CD4-positive, alpha-beta memory T cell (primary cell): ENCODE measurements at regions of chr6 and their contacts with region 1.

Region 1: GRCh38 chr6:45930420-45931040 is 85.1 kb downstream of the CLIC5 start:
- DNase-seq: peak; percentile 39 to 50 (median 45)
- H3K4me3 ChIP-seq: no peak overlapping the region
- H3K4me3 Mint-ChIP-seq: no peak overlapping the region
- H3K27ac ChIP-seq: no peak overlapping the region
- H3K27ac Mint-ChIP-seq: peak overlapping the region in 4 of 7 donors; percentile 5 to 46 (median 10)
- H3K4me1 ChIP-seq: no peaks in the 10 kb centered on the region
- H3K4me1 Mint-ChIP-seq: peaks cover 5 to 8% (median 5%) of the 10 kb centered on the region in 4 donors
- H3K27me3 ChIP-seq: no peaks in the 10 kb centered on the region
- H3K27me3 Mint-ChIP-seq: no peaks in the 10 kb centered on the region

Region 2: GRCh38 chr6:44475779-44476434 is 1454.6 kb before region 1 on chr6:
- CTCF ChIA-PET with region 1: interaction called, 14 read pairs
- POLR2A ChIA-PET with region 1: no interaction called
- intact Hi-C with region 1: no loop called
- DNase-seq: peak; percentile 47 to 66 (median 63)
- H3K4me3 ChIP-seq: no peak overlapping the region
- H3K4me3 Mint-ChIP-seq: no peak overlapping the region
- H3K27ac ChIP-seq: no peak overlapping the region
- H3K27ac Mint-ChIP-seq: no peak overlapping the region
- H3K4me1 ChIP-seq: peaks cover 6% of the 10 kb centered on the region
- H3K4me1 Mint-ChIP-seq: peaks cover 0 to 5% (median 2%) of the 10 kb centered on the region in 4 donors
- H3K27me3 ChIP-seq: no peaks in the 10 kb centered on the region
- H3K27me3 Mint-ChIP-seq: peaks cover 2 to 3% of the 10 kb centered on the region in 2 donors

Region 3: GRCh38 chr6:46011241-46012085 is 80.9 kb after region 1 on chr6:
- CTCF ChIA-PET with region 1: interaction called, 15 read pairs
- POLR2A ChIA-PET with region 1: interaction called, 5 read pairs
- intact Hi-C with region 1: loop called (anchors 2 kb)
- DNase-seq: peak; percentile 72 to 92 (median 83)
- H3K4me3 ChIP-seq: peak overlapping the region; percentile 32 to 42
- H3K4me3 Mint-ChIP-seq: peak overlapping the region; percentile 67 to 99 (median 84)
- H3K27ac ChIP-seq: peak overlapping the region; percentile 71
- H3K27ac Mint-ChIP-seq: peak overlapping the region; percentile 95 to 98 (median 97)
- H3K4me1 ChIP-seq: peaks cover 56% of the 10 kb centered on the region
- H3K4me1 Mint-ChIP-seq: peaks cover 51 to 74% (median 62%) of the 10 kb centered on the region in 4 donors
- H3K27me3 ChIP-seq: no peaks in the 10 kb centered on the region
- H3K27me3 Mint-ChIP-seq: no peaks in the 10 kb centered on the region

Region 4: GRCh38 chr6:46017726-46018125 is 87.2 kb after region 1 on chr6:
- CTCF ChIA-PET with region 1: interaction called, 15 read pairs
- POLR2A ChIA-PET with region 1: interaction called, 5 read pairs
- intact Hi-C with region 1: loop called (anchors 2 kb)
- DNase-seq: no peak
- H3K4me3 ChIP-seq: no peak overlapping the region
- H3K4me3 Mint-ChIP-seq: peak overlapping the region in 1 of 8 donors; percentile 41
- H3K27ac ChIP-seq: no peak overlapping the region
- H3K27ac Mint-ChIP-seq: no peak overlapping the region
- H3K4me1 ChIP-seq: peaks cover 26% of the 10 kb centered on the region
- H3K4me1 Mint-ChIP-seq: peaks cover 25 to 31% (median 27%) of the 10 kb centered on the region in 4 donors
- H3K27me3 ChIP-seq: no peaks in the 10 kb centered on the region
- H3K27me3 Mint-ChIP-seq: no peaks in the 10 kb centered on the region

Region 5: GRCh38 chr6:46042355-46042999 is 111.9 kb after region 1 on chr6:
- CTCF ChIA-PET with region 1: interaction called, 4 read pairs
- POLR2A ChIA-PET with region 1: no interaction called
- intact Hi-C with region 1: loop called (anchors 1 kb)
- DNase-seq: peak in 4 of 5 donors; percentile 15 to 26 (median 23)
- H3K4me3 ChIP-seq: no peak overlapping the region
- H3K4me3 Mint-ChIP-seq: no peak overlapping the region
- H3K27ac ChIP-seq: no peak overlapping the region
- H3K27ac Mint-ChIP-seq: peak overlapping the region in 1 of 7 donors; percentile 8
- H3K4me1 ChIP-seq: no peaks in the 10 kb centered on the region
- H3K4me1 Mint-ChIP-seq: peaks cover 0 to 3% (median 0%) of the 10 kb centered on the region in 4 donors
- H3K27me3 ChIP-seq: no peaks in the 10 kb centered on the region
- H3K27me3 Mint-ChIP-seq: peaks cover 2 to 3% of the 10 kb centered on the region in 2 donors

Region 6: GRCh38 chr6:46410334-46410953 is 479.9 kb after region 1 on chr6:
- CTCF ChIA-PET with region 1: interaction called, 14 read pairs
- POLR2A ChIA-PET with region 1: interaction called, 3 read pairs
- intact Hi-C with region 1: no loop called
- DNase-seq: peak in 4 of 5 donors; percentile 33 to 52 (median 44)
- H3K4me3 ChIP-seq: no peak overlapping the region
- H3K4me3 Mint-ChIP-seq: no peak overlapping the region
- H3K27ac ChIP-seq: no peak overlapping the region
- H3K27ac Mint-ChIP-seq: no peak overlapping the region
- H3K4me1 ChIP-seq: no peaks in the 10 kb centered on the region
- H3K4me1 Mint-ChIP-seq: no peaks in the 10 kb centered on the region
- H3K27me3 ChIP-seq: no peaks in the 10 kb centered on the region
- H3K27me3 Mint-ChIP-seq: peaks cover 0 to 1% of the 10 kb centered on the region in 2 donors

Region 7: GRCh38 chr6:46626228-46626909 is 695.8 kb after region 1 on chr6:
- CTCF ChIA-PET with region 1: no interaction called
- POLR2A ChIA-PET with region 1: no interaction called
- intact Hi-C with region 1: loop called (anchors 1 kb)
- DNase-seq: peak in 4 of 5 donors; percentile 3 to 29 (median 12)
- H3K4me3 ChIP-seq: no peak overlapping the region
- H3K4me3 Mint-ChIP-seq: peak overlapping the region in 5 of 8 donors; percentile 29 to 70 (median 51)
- H3K27ac ChIP-seq: no peak overlapping the region
- H3K27ac Mint-ChIP-seq: no peak overlapping the region
- H3K4me1 ChIP-seq: peaks cover 3% of the 10 kb centered on the region
- H3K4me1 Mint-ChIP-seq: peaks cover 5 to 11% (median 7%) of the 10 kb centered on the region in 4 donors
- H3K27me3 ChIP-seq: no peaks in the 10 kb centered on the region
- H3K27me3 Mint-ChIP-seq: peaks cover 3% of the 10 kb centered on the region in 2 donors